Caco-2 (cell line): ENCODE measurements at regions of chr3 and their contacts with region 1.

Region 1: DNA sequence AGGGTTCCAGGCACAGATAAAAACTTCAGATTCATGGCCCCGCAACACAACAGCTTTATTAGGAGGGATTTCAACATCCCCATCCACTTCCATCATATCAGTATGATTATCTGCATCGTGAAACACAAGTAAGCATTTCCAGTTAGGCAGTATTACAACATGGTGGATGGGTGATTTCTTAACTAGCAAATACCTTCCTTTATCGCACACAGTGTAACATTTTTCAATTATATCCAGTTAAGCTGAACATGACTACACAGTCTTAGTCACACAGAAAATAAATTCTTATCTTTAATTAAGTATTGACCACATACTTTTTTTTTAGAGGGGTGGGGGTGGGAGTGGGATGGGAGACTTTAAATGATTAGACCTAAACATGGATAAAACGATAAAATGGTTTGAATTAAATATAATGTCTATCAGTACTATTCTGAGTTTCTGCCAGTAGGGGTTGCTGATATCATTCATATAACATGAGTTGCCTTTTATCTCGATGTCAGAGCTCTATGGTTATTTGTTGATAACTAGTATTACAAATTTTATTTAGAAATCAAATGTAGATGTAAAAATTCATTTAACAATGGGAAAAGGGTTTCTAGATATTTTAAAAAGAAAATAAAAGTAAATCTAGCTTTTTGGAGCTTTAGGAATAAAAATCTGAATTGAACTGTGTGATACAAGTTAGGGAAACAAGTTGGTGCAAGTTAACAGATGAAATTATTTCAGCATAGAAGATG is 146.6 kb downstream of the TBL1XR1 start:
- DNase-seq: peak in 1 of 2 experiments; percentile 17
- H3K4me3 ChIP-seq: no peak overlapping the region
- H3K4me3 Mint-ChIP-seq: no peak overlapping the region
- H3K27ac Mint-ChIP-seq: no peak overlapping the region
- H3K4me1 ChIP-seq: no peaks in the 10 kb centered on the region
- H3K4me1 Mint-ChIP-seq: peaks cover 6% of the 10 kb centered on the region
- H3K27me3 ChIP-seq: no peaks in the 10 kb centered on the region
- H3K27me3 Mint-ChIP-seq: no peaks in the 10 kb centered on the region
- CTCF ChIP-seq: peak; percentile 18 to 38

Region 2: GRCh38 chr3:177307413-177307812 is 256.7 kb after region 1 on chr3:
- CTCF ChIA-PET with region 1: no interaction called
- POLR2A ChIA-PET with region 1: no interaction called
- intact Hi-C with region 1: loop called (anchors 1 kb)
- DNase-seq: no peak
- H3K4me3 ChIP-seq: no peak overlapping the region
- H3K4me3 Mint-ChIP-seq: no peak overlapping the region
- H3K27ac Mint-ChIP-seq: no peak overlapping the region
- H3K4me1 ChIP-seq: no peaks in the 10 kb centered on the region
- H3K4me1 Mint-ChIP-seq: peaks cover 6% of the 10 kb centered on the region
- H3K27me3 ChIP-seq: no peaks in the 10 kb centered on the region
- H3K27me3 Mint-ChIP-seq: no peaks in the 10 kb centered on the region
- CTCF ChIP-seq: peak in 1 of 2 experiments; percentile 9

Region 3: DNA sequence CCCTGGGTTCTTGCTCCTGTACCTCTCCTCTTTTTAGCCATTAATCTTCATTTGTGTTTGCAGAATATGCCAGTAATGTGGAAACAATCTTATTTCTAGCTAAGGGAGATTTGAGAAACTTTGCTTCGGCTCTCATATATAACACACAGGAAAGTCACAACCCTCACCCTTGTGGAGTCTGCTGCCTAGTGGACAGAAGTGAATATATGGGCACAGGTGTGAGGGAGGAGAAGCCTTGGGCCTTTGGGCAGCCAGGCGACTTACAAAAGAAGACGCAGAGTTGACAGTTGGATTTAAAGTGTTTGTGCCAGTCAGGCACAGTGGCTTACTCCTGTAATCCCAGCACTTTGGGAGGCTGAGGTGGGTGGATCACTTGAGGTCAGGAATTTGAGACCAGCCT is 328.4 kb after region 1 on chr3:
- CTCF ChIA-PET with region 1: no interaction called
- POLR2A ChIA-PET with region 1: no interaction called
- intact Hi-C with region 1: loop called (anchors 1 kb)
- DNase-seq: no peak
- H3K4me3 ChIP-seq: no peak overlapping the region
- H3K4me3 Mint-ChIP-seq: no peak overlapping the region
- H3K27ac Mint-ChIP-seq: no peak overlapping the region
- H3K4me1 ChIP-seq: no peaks in the 10 kb centered on the region
- H3K4me1 Mint-ChIP-seq: peaks cover 12% of the 10 kb centered on the region
- H3K27me3 ChIP-seq: no peaks in the 10 kb centered on the region
- H3K27me3 Mint-ChIP-seq: no peaks in the 10 kb centered on the region
- CTCF ChIP-seq: peak; percentile 14 to 31